BJ (cell line): ENCODE measurements at regions of chr1 and their contacts with region 1.

Region 1: DNA sequence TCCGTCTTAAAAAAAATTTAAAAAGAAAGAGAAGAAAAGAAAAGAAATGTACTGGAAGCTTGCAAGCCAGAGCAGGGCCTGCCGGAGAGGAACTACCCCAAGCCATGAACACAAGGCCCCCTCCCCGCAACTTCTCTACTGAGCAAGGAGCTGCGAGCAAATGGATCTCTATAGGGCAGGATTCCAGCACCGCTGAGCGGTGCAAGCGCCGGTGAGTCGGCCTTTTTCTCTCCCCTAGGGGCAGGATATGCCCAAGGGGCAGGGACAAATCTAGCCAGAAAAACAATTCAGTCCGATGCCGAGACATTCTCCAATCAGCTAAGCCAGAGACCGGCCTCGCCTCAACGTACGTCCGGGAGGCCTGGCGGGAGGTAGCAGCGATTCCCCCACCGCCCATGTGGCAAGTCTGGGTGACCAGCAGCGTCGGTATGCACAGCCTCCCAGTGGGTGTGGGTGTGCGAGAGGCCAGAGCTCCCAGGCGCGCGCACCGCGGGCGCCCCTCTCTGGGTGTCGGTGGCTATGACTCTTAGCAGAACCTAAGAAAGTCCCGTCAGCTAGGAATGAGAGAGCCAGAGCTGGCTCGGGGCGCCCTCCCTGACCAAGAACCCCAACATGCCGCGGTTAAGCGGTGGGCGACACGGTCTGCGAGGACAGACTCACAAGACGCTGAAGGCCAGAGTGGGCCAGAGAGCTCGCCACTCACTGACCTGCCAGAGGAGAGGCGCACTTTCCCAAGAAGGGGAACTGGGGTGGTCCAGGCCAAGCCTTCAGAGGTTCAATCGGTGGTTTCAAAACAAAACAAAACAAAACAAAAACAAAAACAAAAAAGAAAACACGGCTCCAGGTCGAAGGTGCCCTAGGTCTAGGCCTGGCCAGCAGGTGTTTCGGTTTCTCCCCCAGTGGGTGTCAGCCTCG is 1.9 kb downstream of the CSMD2 start:
- DNase-seq: peak; percentile 77
- H3K4me3 ChIP-seq: peak overlapping the region; percentile 62
- H3K27me3 ChIP-seq: peaks cover 11% of the 10 kb centered on the region
- CTCF ChIP-seq: peak; percentile 93

Region 2: DNA sequence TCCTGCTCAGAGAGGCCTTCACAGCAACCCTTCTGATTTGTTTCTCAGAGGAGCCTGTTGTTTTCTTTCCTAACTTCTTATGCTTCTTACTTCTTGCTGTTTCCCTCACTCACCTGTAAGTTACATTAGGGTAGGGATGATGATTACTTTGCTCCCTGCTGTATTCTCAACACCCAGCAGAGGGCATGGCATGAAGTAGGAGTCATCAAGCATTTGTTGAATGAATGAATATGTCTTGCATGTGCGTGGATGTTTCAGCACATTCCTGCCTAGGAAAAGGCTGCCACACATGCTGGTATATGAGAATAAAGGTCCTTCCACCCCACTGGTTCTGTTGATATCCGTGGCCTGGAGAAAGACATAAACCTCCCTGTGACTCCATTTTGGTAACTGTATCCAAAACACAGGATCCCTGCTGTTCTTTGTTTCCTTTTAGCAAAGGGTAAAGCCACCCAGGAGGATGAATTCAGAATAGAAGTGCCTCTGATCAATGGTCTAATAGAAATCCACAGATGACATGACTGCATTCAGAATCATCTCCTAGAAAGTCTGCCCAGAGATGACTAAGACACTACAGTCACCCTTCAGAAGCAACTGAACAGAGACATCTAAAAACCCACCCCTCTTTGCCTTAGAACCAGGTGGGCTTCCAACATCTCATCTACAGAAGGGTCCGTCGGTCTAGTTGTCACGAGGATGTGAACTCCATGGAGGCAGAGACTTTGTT is 521.8 kb before region 1 on chr1:
- CTCF ChIA-PET with region 1: interaction called, 49 read pairs
- POLR2A ChIA-PET with region 1: no interaction called
- DNase-seq: no peak
- H3K4me3 ChIP-seq: no peak overlapping the region
- H3K27me3 ChIP-seq: no peaks in the 10 kb centered on the region
- CTCF ChIP-seq: peak; percentile 45

Region 3: DNA sequence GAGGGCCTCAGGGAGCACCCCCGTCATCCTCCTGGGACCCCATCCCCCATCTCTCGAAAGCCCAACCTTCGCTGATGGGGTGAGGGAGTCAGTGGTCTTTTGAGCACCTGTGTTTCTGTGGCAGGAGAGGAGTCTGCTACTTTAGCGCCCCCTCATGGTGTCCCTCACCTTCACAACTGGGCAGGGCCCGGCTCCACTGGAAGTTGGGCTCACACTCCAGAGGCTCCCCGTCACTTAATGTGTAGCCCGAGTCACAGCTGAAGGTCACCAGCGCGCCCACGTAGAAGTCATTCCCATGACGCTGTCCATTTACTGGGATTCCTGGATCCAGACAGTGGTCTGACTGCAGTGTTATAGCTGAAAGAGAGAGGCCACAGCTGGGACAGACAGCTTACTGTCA is 438.8 kb before region 1 on chr1:
- CTCF ChIA-PET with region 1: interaction called, 11 read pairs
- POLR2A ChIA-PET with region 1: no interaction called
- DNase-seq: no peak
- H3K4me3 ChIP-seq: no peak overlapping the region
- H3K27me3 ChIP-seq: no peaks in the 10 kb centered on the region
- CTCF ChIP-seq: no peak

Region 4: GRCh38 chr1:33997127-33998036 is 165.7 kb before region 1 on chr1:
- CTCF ChIA-PET with region 1: no interaction called
- POLR2A ChIA-PET with region 1: no interaction called
- DNase-seq: no peak
- H3K4me3 ChIP-seq: no peak overlapping the region
- H3K27me3 ChIP-seq: no peaks in the 10 kb centered on the region
- CTCF ChIP-seq: no peak

Region 5: DNA sequence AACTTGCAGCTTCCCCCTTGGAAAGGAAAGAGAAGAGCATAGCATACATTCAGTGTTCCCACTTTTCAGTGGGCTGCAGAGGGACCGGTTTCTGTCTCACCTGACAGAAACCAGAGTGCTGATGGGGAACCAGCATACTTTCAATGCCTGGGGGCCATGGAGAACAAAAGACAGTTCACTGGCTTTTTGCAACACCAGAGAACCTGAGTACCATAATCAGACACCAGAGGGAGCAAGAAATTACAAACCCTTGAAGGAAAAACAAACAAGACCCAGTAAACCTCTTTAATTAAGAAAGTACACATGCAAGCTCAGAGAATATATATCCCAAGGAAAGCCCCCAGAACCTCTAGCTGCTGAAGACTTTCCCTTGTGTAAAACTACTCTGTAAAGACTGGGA is 49.2 kb before region 1 on chr1:
- CTCF ChIA-PET with region 1: interaction called, 37 read pairs
- POLR2A ChIA-PET with region 1: no interaction called
- DNase-seq: no peak
- H3K4me3 ChIP-seq: no peak overlapping the region
- H3K27me3 ChIP-seq: no peaks in the 10 kb centered on the region
- CTCF ChIP-seq: peak; percentile 52

Region 6: GRCh38 chr1:34140011-34140676 is 23.0 kb before region 1 on chr1:
- CTCF ChIA-PET with region 1: interaction called, 16 read pairs
- POLR2A ChIA-PET with region 1: no interaction called
- DNase-seq: no peak
- H3K4me3 ChIP-seq: no peak overlapping the region
- H3K27me3 ChIP-seq: no peaks in the 10 kb centered on the region
- CTCF ChIP-seq: no peak

Region 7: GRCh38 chr1:34441259-34442069 is 278.4 kb after region 1 on chr1:
- CTCF ChIA-PET with region 1: no interaction called
- POLR2A ChIA-PET with region 1: no interaction called
- DNase-seq: no peak
- H3K4me3 ChIP-seq: no peak overlapping the region
- H3K27me3 ChIP-seq: no peaks in the 10 kb centered on the region
- CTCF ChIP-seq: no peak